Endothelial cell of umbilical vein (primary cell): ENCODE measurements at regions of chr1 and their contacts with region 1.

Region 1: DNA sequence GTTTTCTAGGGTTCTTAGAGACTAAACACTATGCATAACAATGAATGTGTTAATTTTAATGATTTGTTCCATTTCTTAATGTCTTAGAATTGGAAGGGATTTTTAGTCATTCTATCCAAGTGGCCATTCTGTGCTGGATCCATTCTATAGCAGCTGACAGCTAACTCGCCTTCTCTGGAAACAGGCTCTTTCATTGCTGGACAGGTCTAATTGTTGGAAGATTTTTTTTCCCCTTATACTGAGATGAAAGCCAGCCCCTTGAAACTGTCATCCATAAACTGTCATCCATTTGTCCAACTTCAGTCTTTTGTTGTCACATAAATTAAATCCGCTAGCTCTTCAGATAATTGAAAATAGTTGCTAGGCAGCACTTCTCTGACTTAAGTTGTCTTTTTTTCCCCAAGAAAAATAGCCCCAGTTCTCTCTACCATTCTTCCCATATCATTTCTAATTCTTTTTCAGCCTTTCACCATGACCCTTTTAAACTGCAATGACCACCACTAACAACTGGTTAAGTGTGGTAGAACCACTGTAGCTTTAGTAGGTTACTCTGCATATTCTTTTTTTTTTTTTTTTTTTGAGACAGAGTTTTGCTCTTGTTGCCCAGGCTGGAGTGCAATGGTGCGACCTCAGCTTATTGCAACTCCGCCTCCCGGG is 19.7 kb downstream of the AK4 start:
- DNase-seq: no peak
- H3K4me3 ChIP-seq: no peak overlapping the region
- H3K27ac ChIP-seq: no peak overlapping the region
- H3K4me1 ChIP-seq: no peaks in the 10 kb centered on the region
- H3K27me3 ChIP-seq: no peaks in the 10 kb centered on the region
- CTCF ChIP-seq: no peak
- POLR2A ChIP-seq: no peak

Region 2: GRCh38 chr1:63575340-63575826 is 1592.3 kb before region 1 on chr1:
- CTCF ChIA-PET with region 1: no interaction called
- POLR2A ChIA-PET with region 1: interaction called, 12 read pairs
- dilution Hi-C with region 1: no loop called
- intact Hi-C with region 1: no loop called
- DNase-seq: peak; percentile 60
- H3K4me3 ChIP-seq: no peak overlapping the region
- H3K27ac ChIP-seq: no peak overlapping the region
- H3K4me1 ChIP-seq: no peaks in the 10 kb centered on the region
- H3K27me3 ChIP-seq: no peaks in the 10 kb centered on the region
- CTCF ChIP-seq: peak; percentile 18 to 20
- POLR2A ChIP-seq: no peak